ENCODE measurements at regions of chr19 and their contacts with region 1.

Region 1: DNA sequence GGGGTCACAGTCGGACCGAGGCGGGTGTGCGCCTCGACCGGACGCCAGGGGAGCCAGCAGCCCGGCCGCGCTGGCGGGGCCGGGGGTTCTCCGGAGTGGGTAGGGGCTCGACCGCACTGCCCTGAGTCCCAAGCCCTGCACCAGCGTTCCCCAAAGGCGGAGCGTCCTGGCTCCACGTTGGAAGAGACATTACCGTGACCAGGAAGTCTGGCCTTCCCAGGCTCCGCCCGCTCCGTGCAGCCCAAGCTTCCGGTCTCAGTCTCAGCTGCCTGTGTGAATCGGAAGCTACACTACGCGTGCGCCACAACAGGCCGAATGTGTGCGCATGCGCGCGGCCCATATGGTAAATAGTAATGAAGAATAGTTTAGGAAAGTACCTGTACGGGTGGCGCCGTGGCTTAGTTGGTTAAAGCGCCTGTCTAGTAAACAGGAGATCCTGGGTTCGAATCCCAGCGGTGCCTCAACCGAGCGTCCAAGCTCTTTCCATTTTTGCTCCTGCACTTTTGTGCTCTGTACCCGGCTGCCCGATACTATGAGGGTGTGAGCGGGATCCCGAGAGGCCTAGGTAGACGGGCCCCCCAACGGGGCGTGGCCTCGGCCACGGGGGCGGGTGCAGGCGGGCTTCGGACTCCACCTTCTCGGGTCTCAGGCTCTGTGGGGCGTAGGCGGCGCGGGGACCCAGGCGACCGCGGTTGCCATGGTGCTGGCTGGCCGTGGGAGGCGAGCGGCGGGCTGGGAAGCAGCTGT is 17.3 kb upstream of the LRP3 start:
- DNase-seq: peak; percentile 98

Region 2: GRCh38 chr19:32595491-32595890 is 581.4 kb before region 1 on chr19:
- intact Hi-C with region 1: no loop called
- DNase-seq: no peak

Region 3: GRCh38 chr19:33080761-33081681 is 95.8 kb before region 1 on chr19 and contains the start of gene GPATCH1:
- intact Hi-C with region 1: loop called (anchors 5 kb)
- DNase-seq: peak; percentile 95
- total RNA-seq, gene GPATCH1: 5.2 TPM

Region 4: GRCh38 chr19:33193865-33194362 is 17.1 kb after region 1 on chr19 and contains the start of gene LRP3:
- intact Hi-C with region 1: no loop called
- DNase-seq: no peak
- total RNA-seq, gene LRP3: 22.4 TPM